HEK293 (cell line): ENCODE measurements at regions of chr12 and their contacts with region 1.

Region 1: DNA sequence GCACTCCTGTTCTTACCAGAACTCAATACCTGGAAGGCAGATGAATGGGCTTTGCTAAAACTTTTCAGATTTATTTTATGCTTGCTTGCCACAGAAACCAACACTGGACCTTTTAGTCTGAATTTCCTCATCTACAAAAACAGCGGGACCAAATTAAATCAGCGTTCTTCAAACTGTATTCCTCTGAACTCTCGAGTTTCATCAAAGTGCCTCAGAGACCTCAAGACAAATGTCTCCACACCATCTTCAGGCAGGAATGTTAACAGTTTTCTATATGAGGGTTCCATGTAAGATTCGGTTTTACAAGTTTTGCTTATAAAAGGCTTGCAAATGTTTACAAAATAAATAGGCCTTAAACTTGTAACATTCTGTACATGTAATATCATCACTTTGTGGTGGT is 74.6 kb downstream of the MED13L start:
- H3K4me3 ChIP-seq: no peak overlapping the region
- H3K27ac ChIP-seq: no peak overlapping the region
- H3K4me1 ChIP-seq: peaks cover 15% of the 10 kb centered on the region
- CTCF ChIP-seq: no peak

Region 2: DNA sequence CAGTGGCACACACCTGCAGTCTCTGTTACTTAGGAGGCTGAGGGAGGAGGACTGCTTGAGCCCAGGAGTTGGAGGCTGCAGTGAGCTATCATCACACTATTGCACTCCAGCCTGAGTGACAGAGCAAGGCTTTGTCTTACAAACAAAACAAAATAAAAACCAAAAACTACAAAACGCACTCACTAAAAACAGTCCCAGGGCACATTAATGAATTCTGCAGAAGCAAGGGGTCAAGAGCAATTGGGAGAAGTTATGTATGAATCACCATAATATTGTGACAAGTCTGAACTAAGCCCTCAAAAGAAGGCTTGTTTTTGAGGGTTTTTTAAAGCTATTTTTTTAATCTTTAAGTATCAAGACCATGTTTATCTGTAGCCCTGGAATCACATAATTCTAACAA is 126.5 kb before region 1 on chr12:
- CTCF ChIA-PET with region 1: no interaction called
- POLR2A ChIA-PET with region 1: interaction called, 10 read pairs
- H3K4me3 ChIP-seq: no peak overlapping the region
- H3K27ac ChIP-seq: no peak overlapping the region
- H3K4me1 ChIP-seq: peaks cover 11% of the 10 kb centered on the region
- CTCF ChIP-seq: no peak

Region 3: DNA sequence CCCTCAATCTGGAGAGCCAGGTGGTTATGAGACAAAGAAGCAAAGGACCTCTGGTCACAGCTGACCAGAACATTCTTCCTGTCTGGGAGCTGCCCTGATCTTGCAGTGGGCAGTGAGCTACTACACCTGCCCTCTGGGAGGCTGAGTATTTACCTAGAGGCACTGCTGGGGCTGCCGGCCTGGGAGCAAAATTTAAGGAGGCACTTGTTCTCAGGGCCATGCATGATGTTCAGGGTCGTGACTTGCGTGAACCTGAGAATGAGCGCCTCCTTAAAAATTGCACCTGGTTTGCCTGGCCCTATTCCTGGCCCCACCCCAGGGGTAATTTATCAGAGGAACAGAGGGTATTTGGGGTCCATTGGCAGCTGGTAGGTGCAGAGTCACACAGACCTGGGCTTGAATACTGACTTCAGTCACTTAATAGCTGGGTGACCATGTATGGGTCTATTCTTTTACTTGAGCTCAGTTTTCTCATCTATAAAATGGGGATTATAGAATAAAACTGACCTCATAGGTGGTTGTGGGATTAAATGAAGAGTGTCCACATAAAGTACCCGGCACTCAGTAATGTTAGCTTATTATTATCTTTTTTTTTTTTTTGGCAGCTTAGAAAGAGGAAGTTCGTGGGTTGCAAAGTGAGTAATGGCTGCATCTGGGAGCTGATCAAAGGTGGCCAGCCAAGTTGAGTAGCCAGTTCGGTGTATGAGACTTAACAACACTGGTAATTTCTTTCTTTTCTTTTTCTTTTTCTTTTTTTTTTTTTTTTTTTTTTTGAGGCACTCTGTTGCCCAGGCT is 181.9 kb after region 1 on chr12:
- CTCF ChIA-PET with region 1: no interaction called
- POLR2A ChIA-PET with region 1: interaction called, 11 read pairs
- H3K4me3 ChIP-seq: no peak overlapping the region
- H3K27ac ChIP-seq: no peak overlapping the region
- H3K4me1 ChIP-seq: no peaks in the 10 kb centered on the region
- CTCF ChIP-seq: no peak